B cell (primary cell): ENCODE measurements at regions of chr19 and their contacts with region 1.

Region 1: GRCh38 chr19:1942078-1942933 is 1.3 kb downstream of the CSNK1G2 start:
- DNase-seq: peak; percentile 87
- ATAC-seq: peak; percentile 53
- H3K4me3 ChIP-seq: peak overlapping the region; percentile 71 to 94 (median 83)
- H3K4me3 Mint-ChIP-seq: peak overlapping the region; percentile 98
- H3K27ac ChIP-seq: peak overlapping the region; percentile 90 to 99
- H3K27ac Mint-ChIP-seq: peak overlapping the region; percentile 98
- H3K4me1 ChIP-seq: peaks cover 31 to 47% of the 10 kb centered on the region in 2 donors
- H3K4me1 Mint-ChIP-seq: peaks cover 39% of the 10 kb centered on the region
- H3K27me3 ChIP-seq: no peaks in the 10 kb centered on the region
- H3K27me3 Mint-ChIP-seq: no peaks in the 10 kb centered on the region
- CTCF ChIP-seq: no peak

Region 2: GRCh38 chr19:1478934-1479707 is 463.2 kb before region 1 on chr19 and contains the start of gene C19orf25:
- CTCF ChIA-PET with region 1: no interaction called
- POLR2A ChIA-PET with region 1: no interaction called
- intact Hi-C with region 1: no loop called
- DNase-seq: peak; percentile 94
- ATAC-seq: peak; percentile 94
- H3K4me3 ChIP-seq: peak within 1 kb of the TSS; percentile 50 to 92 (median 79)
- H3K4me3 Mint-ChIP-seq: peak within 1 kb of the TSS; percentile 97
- H3K27ac ChIP-seq: peak within 1 kb of the TSS; percentile 71 to 83
- H3K27ac Mint-ChIP-seq: peak within 1 kb of the TSS; percentile 93
- H3K4me1 ChIP-seq: peaks cover 6 to 22% of the 10 kb centered on the region in 2 donors
- H3K4me1 Mint-ChIP-seq: peaks cover 13% of the 10 kb centered on the region
- H3K27me3 ChIP-seq: no peaks in the 10 kb centered on the region
- H3K27me3 Mint-ChIP-seq: no peaks in the 10 kb centered on the region
- CTCF ChIP-seq: no peak
- total RNA-seq, gene C19orf25: 68.1 and 68.3 TPM in 2 replicates

Region 3: GRCh38 chr19:1833540-1833939 is 108.8 kb before region 1 on chr19:
- CTCF ChIA-PET with region 1: no interaction called
- POLR2A ChIA-PET with region 1: no interaction called
- intact Hi-C with region 1: no loop called
- DNase-seq: no peak
- ATAC-seq: no peak
- H3K4me3 ChIP-seq: no peak overlapping the region
- H3K4me3 Mint-ChIP-seq: no peak overlapping the region
- H3K27ac ChIP-seq: no peak overlapping the region
- H3K27ac Mint-ChIP-seq: no peak overlapping the region
- H3K4me1 ChIP-seq: peaks cover 3 to 8% of the 10 kb centered on the region in 2 donors
- H3K4me1 Mint-ChIP-seq: peaks cover 8% of the 10 kb centered on the region
- H3K27me3 ChIP-seq: no peaks in the 10 kb centered on the region
- H3K27me3 Mint-ChIP-seq: no peaks in the 10 kb centered on the region
- CTCF ChIP-seq: no peak

Region 4: GRCh38 chr19:1875646-1876495 is 66.4 kb before region 1 on chr19:
- CTCF ChIA-PET with region 1: no interaction called
- POLR2A ChIA-PET with region 1: no interaction called
- intact Hi-C with region 1: loop called (anchors 1 kb)
- DNase-seq: peak; percentile 93
- ATAC-seq: peak; percentile 94
- H3K4me3 ChIP-seq: peak overlapping the region; percentile 81 to 97 (median 92)
- H3K4me3 Mint-ChIP-seq: peak overlapping the region; percentile 99
- H3K27ac ChIP-seq: peak overlapping the region; percentile 66 to 96
- H3K27ac Mint-ChIP-seq: peak overlapping the region; percentile 94
- H3K4me1 ChIP-seq: peaks cover 20 to 36% of the 10 kb centered on the region in 2 donors
- H3K4me1 Mint-ChIP-seq: peaks cover 28% of the 10 kb centered on the region
- H3K27me3 ChIP-seq: no peaks in the 10 kb centered on the region
- H3K27me3 Mint-ChIP-seq: no peaks in the 10 kb centered on the region
- CTCF ChIP-seq: no peak

Region 5: DNA sequence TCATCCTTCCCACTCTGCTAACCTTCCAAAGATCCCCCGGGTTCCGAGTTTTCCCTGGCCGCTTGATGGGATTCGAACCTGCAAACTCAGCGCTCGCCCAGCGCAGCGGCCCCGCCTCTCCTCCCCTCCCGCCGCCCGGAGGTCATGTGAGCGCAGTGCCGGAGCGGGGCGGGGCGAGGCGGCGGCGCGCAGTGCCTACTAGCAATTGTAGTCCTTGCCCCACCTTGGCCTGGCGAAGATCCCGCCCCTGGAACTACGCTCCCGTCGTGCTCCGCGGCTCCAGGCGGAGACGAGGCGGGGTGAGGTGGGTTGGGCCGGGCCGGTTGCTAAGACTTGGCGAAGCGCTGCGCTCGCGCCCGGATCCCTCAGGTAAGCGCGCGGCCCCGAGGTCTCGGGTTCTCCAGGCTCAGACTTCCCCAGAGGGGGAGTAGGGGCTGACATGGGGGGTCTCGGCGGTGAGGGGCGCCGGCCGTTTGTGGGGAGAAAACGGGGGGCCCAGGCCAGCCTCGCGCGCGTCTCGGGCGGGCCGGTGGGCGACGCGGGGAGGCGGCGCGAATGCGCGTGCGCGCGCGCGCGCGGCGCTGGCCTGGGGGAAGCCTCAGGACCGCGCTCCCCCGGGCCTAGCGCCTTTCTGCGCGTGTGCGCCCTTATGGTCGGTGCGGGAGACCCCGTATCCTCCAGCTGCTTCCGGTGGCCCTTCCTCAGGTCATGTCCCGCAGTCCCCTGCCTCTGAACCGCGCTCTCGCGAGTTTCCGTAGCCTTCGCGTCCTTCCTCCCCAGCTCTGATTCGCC is 37.0 kb before region 1 on chr19 and contains the starts of genes ADAT3 and SCAMP4:
- CTCF ChIA-PET with region 1: interaction called, 3 read pairs
- POLR2A ChIA-PET with region 1: interaction called, 12 read pairs
- intact Hi-C with region 1: no loop called
- DNase-seq: peak; percentile 98
- ATAC-seq: peak; percentile 92
- H3K4me3 ChIP-seq: peak within 1 kb of the TSS; percentile 8 to 75 (median 66)
- H3K4me3 Mint-ChIP-seq: peak within 1 kb of the TSS; percentile 90
- H3K27ac ChIP-seq: peak within 1 kb of the TSS; percentile 78 to 90
- H3K27ac Mint-ChIP-seq: peak within 1 kb of the TSS; percentile 96
- H3K4me1 ChIP-seq: peaks cover 48 to 70% of the 10 kb centered on the region in 2 donors
- H3K4me1 Mint-ChIP-seq: peaks cover 49% of the 10 kb centered on the region
- H3K27me3 ChIP-seq: no peaks in the 10 kb centered on the region
- H3K27me3 Mint-ChIP-seq: no peaks in the 10 kb centered on the region
- CTCF ChIP-seq: no peak
- total RNA-seq, gene ADAT3: 13.4 and 13.9 TPM in 2 replicates
- total RNA-seq, gene SCAMP4: 60.0 and 62.9 TPM in 2 replicates

Region 6: DNA sequence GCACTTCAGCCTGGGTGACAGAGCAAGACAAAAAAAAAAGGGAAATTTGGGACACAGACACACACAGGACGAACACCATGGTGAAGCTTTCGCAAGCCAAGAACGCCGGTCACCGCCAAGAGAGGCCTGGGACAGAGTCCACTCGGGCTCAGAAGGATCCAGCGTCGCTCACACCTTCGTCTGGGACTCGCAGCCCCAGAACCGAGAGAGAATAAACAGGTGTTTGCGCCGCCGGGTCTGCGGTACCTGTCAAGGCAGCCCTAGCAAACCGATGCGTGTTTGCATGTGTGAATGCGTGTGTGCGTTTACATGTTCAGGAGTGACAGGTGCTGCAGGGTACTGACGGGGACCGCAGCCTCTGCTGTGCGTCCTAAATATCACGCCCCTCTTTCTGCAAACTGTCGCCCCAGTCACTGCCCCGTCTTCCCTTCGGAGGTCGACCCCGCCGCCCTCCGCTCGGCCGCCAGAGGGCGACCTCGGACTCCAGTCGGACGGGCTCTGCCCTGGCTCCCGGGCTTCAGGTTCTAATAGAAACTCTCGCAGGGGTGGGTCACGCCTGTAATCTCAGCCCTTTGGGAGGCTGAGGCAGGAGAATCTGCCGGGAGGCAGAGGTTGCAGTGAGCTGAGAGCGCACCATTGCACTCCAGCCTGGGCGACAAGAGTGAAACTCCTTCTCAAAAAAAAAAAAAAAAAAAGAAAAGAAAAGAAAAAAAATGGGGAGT is 13.1 kb before region 1 on chr19:
- CTCF ChIA-PET with region 1: interaction called, 7 read pairs
- POLR2A ChIA-PET with region 1: interaction called, 15 read pairs
- intact Hi-C with region 1: no loop called
- DNase-seq: peak; percentile 87
- ATAC-seq: peak; percentile 80
- H3K4me3 ChIP-seq: peak overlapping the region in 4 of 5 experiments; percentile 40 to 63 (median 48)
- H3K4me3 Mint-ChIP-seq: peak overlapping the region; percentile 84
- H3K27ac ChIP-seq: no peak overlapping the region
- H3K27ac Mint-ChIP-seq: peak overlapping the region; percentile 80
- H3K4me1 ChIP-seq: peaks cover 33 to 47% of the 10 kb centered on the region in 2 donors
- H3K4me1 Mint-ChIP-seq: peaks cover 44% of the 10 kb centered on the region
- H3K27me3 ChIP-seq: no peaks in the 10 kb centered on the region
- H3K27me3 Mint-ChIP-seq: no peaks in the 10 kb centered on the region
- CTCF ChIP-seq: peak; percentile 96

Region 7: DNA sequence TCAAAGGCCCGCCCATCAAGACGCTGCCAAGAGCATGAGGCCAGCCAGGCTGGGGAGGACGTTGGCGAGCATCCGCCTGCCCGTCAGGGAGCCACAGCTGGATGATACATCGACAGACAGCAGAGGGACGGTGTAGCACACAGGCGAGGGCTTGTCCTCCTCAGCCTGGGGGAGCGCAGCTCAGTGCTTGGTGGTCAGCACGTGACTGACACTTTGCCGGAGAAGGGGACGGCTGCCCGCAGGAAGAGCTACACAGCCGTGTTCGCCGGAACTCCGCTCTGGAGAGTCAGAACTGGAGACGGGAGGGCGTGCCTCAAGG is 32.8 kb after region 1 on chr19:
- CTCF ChIA-PET with region 1: no interaction called
- POLR2A ChIA-PET with region 1: no interaction called
- intact Hi-C with region 1: no loop called
- DNase-seq: no peak
- ATAC-seq: no peak
- H3K4me3 ChIP-seq: no peak overlapping the region
- H3K4me3 Mint-ChIP-seq: no peak overlapping the region
- H3K27ac ChIP-seq: no peak overlapping the region
- H3K27ac Mint-ChIP-seq: no peak overlapping the region
- H3K4me1 ChIP-seq: peaks cover 0 to 6% of the 10 kb centered on the region in 2 donors
- H3K4me1 Mint-ChIP-seq: peaks cover 4% of the 10 kb centered on the region
- H3K27me3 ChIP-seq: no peaks in the 10 kb centered on the region
- H3K27me3 Mint-ChIP-seq: no peaks in the 10 kb centered on the region
- CTCF ChIP-seq: no peak

Region 8: DNA sequence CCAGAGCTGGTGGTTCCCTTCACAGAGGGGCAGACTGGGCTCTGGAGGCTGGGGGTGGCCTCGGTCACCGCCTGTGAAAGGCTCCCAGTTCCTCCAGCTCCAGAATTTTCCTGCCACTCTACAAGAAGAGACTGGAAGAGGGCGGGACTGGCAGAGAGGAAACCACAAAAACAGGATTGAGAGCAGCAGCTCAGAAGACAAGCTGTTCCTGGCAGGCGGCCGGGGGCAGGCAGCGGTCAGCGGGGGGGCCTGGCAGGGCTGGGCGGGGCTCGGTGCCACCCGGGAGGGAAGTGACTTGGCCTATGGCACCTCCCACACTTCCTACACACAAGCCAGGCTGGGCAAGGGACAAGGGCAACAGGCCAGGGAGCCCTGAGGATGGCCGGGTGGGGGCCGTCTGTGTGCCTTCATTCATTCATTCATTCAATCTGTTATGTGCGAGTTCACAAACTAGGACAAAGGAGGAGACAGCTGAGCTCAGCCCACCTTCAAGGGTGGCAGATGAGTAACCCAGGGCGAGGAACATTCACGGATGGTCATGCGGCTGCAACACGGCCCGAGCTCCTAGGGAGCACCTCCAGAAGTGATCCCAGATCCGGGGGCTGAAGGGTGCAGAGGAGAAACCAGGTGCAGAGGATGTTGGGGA is 90.1 kb after region 1 on chr19:
- CTCF ChIA-PET with region 1: no interaction called
- POLR2A ChIA-PET with region 1: interaction called, 10 read pairs
- intact Hi-C with region 1: no loop called
- DNase-seq: peak; percentile 54
- ATAC-seq: peak; percentile 50
- H3K4me3 ChIP-seq: peak overlapping the region in 2 of 5 experiments; percentile 9 to 50
- H3K4me3 Mint-ChIP-seq: peak overlapping the region; percentile 63
- H3K27ac ChIP-seq: peak overlapping the region; percentile 16 to 29
- H3K27ac Mint-ChIP-seq: peak overlapping the region; percentile 62
- H3K4me1 ChIP-seq: peaks cover 17 to 34% of the 10 kb centered on the region in 2 donors
- H3K4me1 Mint-ChIP-seq: peaks cover 26% of the 10 kb centered on the region
- H3K27me3 ChIP-seq: no peaks in the 10 kb centered on the region
- H3K27me3 Mint-ChIP-seq: no peaks in the 10 kb centered on the region
- CTCF ChIP-seq: no peak

Region 9: DNA sequence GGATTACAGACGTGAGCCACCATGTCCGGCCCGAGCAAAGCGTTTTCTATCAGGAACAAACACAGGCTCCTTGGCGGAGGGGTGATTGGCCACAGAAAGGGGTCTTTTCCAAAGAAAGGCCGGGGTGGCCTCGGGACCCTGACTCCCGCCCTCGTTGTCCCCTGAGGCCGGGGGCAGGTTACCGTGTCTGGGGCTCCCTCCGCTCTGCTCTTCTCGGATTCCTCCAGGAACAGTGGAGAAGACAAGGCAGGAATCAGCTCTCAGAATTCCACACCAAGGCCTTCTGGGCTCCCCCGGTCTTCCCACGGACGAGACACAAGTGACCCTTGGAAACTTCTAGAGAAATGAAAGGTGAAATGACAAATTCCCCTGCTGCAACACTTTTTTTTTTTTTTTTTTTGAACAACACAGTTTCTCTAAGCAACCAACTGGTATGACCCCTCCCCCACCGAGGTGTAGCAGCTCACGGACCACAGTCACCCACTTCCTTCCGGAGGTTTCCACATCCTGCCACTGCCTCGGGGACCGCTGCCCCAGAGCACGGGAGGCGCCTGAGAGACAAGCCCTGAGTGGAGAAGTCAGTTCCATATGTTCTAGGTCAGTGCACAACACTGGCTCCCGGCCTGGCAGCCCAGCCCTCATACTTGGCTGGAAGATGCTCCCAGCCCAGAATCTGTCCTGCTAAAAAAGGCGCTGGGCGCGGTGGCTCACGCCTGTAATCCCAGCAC is 142.9 kb after region 1 on chr19:
- CTCF ChIA-PET with region 1: no interaction called
- POLR2A ChIA-PET with region 1: interaction called, 6 read pairs
- intact Hi-C with region 1: loop called (anchors 1 kb)
- DNase-seq: peak; percentile 97
- ATAC-seq: peak; percentile 29
- H3K4me3 ChIP-seq: peak overlapping the region; percentile 87 to 100 (median 98)
- H3K4me3 Mint-ChIP-seq: peak overlapping the region; percentile 92
- H3K27ac ChIP-seq: peak overlapping the region; percentile 96 to 99
- H3K27ac Mint-ChIP-seq: peak overlapping the region; percentile 99
- H3K4me1 ChIP-seq: peaks cover 74 to 81% of the 10 kb centered on the region in 2 donors
- H3K4me1 Mint-ChIP-seq: peaks cover 79% of the 10 kb centered on the region
- H3K27me3 ChIP-seq: no peaks in the 10 kb centered on the region
- H3K27me3 Mint-ChIP-seq: no peaks in the 10 kb centered on the region
- CTCF ChIP-seq: no peak

Region 10: DNA sequence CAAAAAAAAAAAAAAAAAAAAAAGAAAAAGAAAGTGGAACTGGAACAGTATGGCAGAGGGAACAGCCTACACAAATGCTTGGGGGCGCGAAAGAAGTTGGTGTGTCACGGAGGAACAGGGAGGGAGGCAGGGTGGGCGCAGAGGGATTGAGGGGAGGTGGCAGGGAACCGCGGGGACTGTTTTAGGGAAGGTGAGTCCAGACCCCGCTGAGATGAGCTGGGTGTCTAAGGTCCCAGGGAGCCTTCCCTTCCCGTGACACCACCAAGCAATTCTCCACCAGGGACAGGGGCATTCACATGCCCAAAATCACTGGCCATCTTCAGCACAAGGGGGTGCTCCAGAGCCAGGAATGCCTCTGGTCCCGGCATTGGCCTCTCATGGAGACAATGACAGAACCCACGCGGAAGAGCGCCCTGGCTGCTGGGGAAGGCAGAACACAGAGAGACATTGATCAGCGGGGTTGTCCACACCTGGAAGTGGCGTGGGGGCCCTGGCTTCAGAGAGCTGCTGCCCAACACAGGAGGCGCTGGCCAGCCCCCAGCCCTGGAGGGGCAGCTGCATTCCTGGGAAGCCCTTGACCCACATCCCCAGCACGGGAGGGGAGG is 332.7 kb after region 1 on chr19:
- CTCF ChIA-PET with region 1: no interaction called
- POLR2A ChIA-PET with region 1: interaction called, 10 read pairs
- intact Hi-C with region 1: no loop called
- DNase-seq: peak; percentile 75
- ATAC-seq: no peak
- H3K4me3 ChIP-seq: no peak overlapping the region
- H3K4me3 Mint-ChIP-seq: peak overlapping the region; percentile 59
- H3K27ac ChIP-seq: peak overlapping the region; percentile 18 to 41
- H3K27ac Mint-ChIP-seq: peak overlapping the region; percentile 84
- H3K4me1 ChIP-seq: peaks cover 37 to 53% of the 10 kb centered on the region in 2 donors
- H3K4me1 Mint-ChIP-seq: peaks cover 46% of the 10 kb centered on the region
- H3K27me3 ChIP-seq: no peaks in the 10 kb centered on the region
- H3K27me3 Mint-ChIP-seq: no peaks in the 10 kb centered on the region
- CTCF ChIP-seq: peak; percentile 48